Activated CD4-positive, alpha-beta memory T cell treated with anti-CD3 and anti-CD28 coated beads, Interleukin-2, amount 10 ng/mL, durations not matched to agents 7 days and 5 days (primary cell): ENCODE measurements at regions of chr1 and their contacts with region 1.

Region 1: GRCh38 chr1:2545759-2546514 is 10.2 kb upstream of the TNFRSF14 start:
- DNase-seq: peak; percentile 94
- H3K4me3 Mint-ChIP-seq: peak overlapping the region; percentile 94
- H3K27ac Mint-ChIP-seq: peak overlapping the region; percentile 99
- H3K4me1 Mint-ChIP-seq: peaks cover 22% of the 10 kb centered on the region
- H3K27me3 Mint-ChIP-seq: peaks cover 9% of the 10 kb centered on the region

Region 2: DNA sequence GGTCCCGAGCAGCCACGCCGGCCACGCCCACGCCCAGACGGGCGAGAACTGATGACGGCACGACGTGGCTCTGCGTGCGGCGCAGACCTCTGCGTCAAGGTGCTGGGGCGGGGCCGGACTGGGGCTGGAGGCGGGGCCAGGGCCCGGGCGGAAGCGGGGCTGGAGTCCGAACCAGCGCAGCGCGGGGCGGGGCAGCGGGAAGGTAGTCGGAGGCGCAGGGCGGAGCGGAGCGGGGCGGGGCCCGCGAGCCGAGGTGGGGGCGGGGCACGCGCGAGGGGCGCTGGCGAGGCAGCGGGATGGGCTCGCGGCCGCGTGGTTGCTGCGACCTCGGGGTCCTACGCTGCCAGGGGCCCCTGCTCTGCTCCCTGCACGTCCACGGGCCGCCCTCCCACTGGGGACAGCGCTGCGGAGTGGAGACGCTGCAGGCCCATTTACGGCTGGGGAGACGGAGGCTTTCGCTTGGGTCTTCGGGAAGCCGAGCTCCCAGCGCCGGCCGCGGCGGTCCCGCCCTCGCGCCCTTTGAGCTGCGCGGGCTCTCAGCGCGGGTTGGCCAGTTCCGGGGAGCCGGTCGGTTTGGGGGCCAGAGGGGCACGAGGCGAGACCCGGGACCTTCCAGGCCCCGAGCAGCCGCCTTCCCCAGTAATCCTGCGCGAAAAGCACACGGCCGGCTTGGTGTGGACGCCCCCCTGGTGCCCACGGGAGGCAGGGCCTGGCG is 133.3 kb before region 1 on chr1 and contains the start of gene PEX10:
- CTCF ChIA-PET with region 1: interaction called, 41 read pairs
- POLR2A ChIA-PET with region 1: interaction called, 50 read pairs
- DNase-seq: peak; percentile 99
- H3K4me3 Mint-ChIP-seq: peak within 1 kb of the TSS; percentile 85
- H3K27ac Mint-ChIP-seq: peak within 1 kb of the TSS; percentile 94
- H3K4me1 Mint-ChIP-seq: peaks cover 40% of the 10 kb centered on the region
- H3K27me3 Mint-ChIP-seq: no peaks in the 10 kb centered on the region
- total RNA-seq, gene PEX10: 6.8 to 9.5 TPM

Region 3: GRCh38 chr1:2525920-2526823 is 19.8 kb before region 1 on chr1 and contains the start of gene PANK4:
- CTCF ChIA-PET with region 1: interaction called, 81 read pairs
- POLR2A ChIA-PET with region 1: interaction called, 228 read pairs
- DNase-seq: peak; percentile 93
- H3K4me3 Mint-ChIP-seq: peak within 1 kb of the TSS; percentile 80
- H3K27ac Mint-ChIP-seq: peak within 1 kb of the TSS; percentile 93
- H3K4me1 Mint-ChIP-seq: peaks cover 51% of the 10 kb centered on the region
- H3K27me3 Mint-ChIP-seq: peaks cover 21% of the 10 kb centered on the region
- total RNA-seq, gene PANK4: 71.7 to 72.6 TPM

Region 4: DNA sequence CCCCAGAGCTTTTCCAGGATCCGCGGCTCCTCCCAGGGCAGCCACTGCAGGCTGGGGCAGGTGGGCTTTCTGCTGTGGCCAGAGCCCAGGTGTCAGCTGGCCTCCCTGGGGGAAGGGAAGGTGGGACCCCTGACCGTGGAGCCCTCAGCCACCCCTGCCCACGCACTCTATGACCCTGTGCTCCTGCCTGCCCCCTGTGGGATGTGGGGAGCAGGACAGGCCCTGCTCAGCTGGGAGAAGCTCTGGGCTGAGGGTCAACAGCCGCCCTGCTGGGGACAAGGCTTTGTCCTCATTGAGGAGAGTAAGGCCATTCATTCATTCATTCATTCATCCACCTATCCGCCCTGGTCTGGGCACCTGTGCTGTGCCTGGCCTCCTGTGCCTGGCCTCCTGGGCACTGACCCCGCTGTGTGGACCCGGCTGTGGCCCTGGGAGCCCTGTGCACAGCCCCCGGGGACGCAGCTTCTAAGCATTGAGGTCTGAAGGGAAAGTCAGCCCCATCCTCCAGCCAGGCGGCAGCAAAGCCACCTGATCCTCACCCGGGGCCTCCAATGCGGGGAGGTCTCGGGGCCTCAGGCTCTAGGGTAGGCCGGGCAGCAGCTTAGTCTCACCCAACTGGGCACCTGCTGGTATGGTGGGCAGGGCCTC is 16.1 kb after region 1 on chr1:
- CTCF ChIA-PET with region 1: interaction called, 32 read pairs
- POLR2A ChIA-PET with region 1: interaction called, 82 read pairs
- DNase-seq: no peak
- H3K4me3 Mint-ChIP-seq: no peak overlapping the region
- H3K27ac Mint-ChIP-seq: no peak overlapping the region
- H3K4me1 Mint-ChIP-seq: peaks cover 19% of the 10 kb centered on the region
- H3K27me3 Mint-ChIP-seq: no peaks in the 10 kb centered on the region

Region 5: GRCh38 chr1:2586154-2587070 is 40.5 kb after region 1 on chr1 and contains the start of gene PRXL2B:
- CTCF ChIA-PET with region 1: interaction called, 32 read pairs
- POLR2A ChIA-PET with region 1: interaction called, 113 read pairs
- DNase-seq: peak; percentile 99
- H3K4me3 Mint-ChIP-seq: peak within 1 kb of the TSS; percentile 88
- H3K27ac Mint-ChIP-seq: peak within 1 kb of the TSS; percentile 93
- H3K4me1 Mint-ChIP-seq: peaks cover 33% of the 10 kb centered on the region
- H3K27me3 Mint-ChIP-seq: no peaks in the 10 kb centered on the region
- total RNA-seq, gene PRXL2B: 17.0 to 22.2 TPM